Activated naive CD4-positive, alpha-beta T cell treated with anti-CD3 and anti-CD28 coated beads for 36 hours (primary cell): ENCODE measurements at regions of chr12 and their contacts with region 1.

Region 1: GRCh38 chr12:121399391-121400331 is at the start of gene RNF34:
- DNase-seq: peak; percentile 99
- H3K4me3 Mint-ChIP-seq: peak within 1 kb of the TSS; percentile 87
- H3K27ac Mint-ChIP-seq: peak within 1 kb of the TSS; percentile 93
- H3K4me1 Mint-ChIP-seq: peaks cover 32% of the 10 kb centered on the region
- H3K27me3 Mint-ChIP-seq: no peaks in the 10 kb centered on the region
- total RNA-seq, gene RNF34: 54.1 to 57.0 TPM

Region 2: GRCh38 chr12:121334513-121335343 is 64.9 kb before region 1 on chr12:
- CTCF ChIA-PET with region 1: interaction called, 17 read pairs
- intact Hi-C with region 1: loop called (anchors 1 kb)
- DNase-seq: peak; percentile 25
- H3K4me3 Mint-ChIP-seq: no peak overlapping the region
- H3K27ac Mint-ChIP-seq: no peak overlapping the region
- H3K4me1 Mint-ChIP-seq: no peaks in the 10 kb centered on the region
- H3K27me3 Mint-ChIP-seq: no peaks in the 10 kb centered on the region

Region 3: GRCh38 chr12:121376754-121377697 is 22.6 kb before region 1 on chr12:
- CTCF ChIA-PET with region 1: no interaction called
- intact Hi-C with region 1: no loop called
- DNase-seq: no peak
- H3K4me3 Mint-ChIP-seq: no peak overlapping the region
- H3K27ac Mint-ChIP-seq: no peak overlapping the region
- H3K4me1 Mint-ChIP-seq: no peaks in the 10 kb centered on the region
- H3K27me3 Mint-ChIP-seq: no peaks in the 10 kb centered on the region

Region 4: DNA sequence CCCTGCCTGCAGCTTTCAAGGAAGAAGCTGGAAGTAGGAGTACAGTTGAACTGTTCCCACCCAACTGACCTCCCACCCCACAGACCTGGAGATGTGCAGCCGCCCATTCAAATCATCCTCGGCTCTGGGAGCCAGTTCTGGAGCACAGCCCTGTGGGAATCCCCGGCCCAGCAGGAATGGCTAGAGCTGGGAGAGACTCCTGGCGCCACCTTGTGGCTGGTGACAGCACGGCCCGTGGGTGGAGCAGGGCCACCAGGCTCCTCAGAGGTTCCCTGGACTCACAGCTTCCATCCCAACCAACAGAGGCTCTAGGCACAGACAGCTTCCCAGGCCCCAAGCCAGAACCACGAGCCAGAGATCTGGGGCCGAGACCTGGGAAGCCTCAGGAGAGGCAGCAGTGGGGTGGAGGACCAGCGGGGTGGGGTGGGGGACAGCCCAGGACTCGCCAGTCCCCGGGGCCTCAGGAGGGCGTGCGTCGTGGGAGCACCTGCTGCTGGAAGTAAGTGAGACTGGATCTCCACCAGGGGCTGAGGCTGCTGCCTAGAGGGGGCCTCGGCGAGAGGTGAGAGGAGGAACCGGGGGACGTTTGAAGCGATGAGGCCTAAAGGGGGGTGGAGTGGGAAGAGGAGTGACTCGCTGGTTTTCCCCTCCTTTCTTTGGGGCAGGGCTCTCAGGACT is 43.7 kb after region 1 on chr12:
- CTCF ChIA-PET with region 1: interaction called, 17 read pairs
- intact Hi-C with region 1: no loop called
- DNase-seq: peak; percentile 81
- H3K4me3 Mint-ChIP-seq: no peak overlapping the region
- H3K27ac Mint-ChIP-seq: peak overlapping the region; percentile 74
- H3K4me1 Mint-ChIP-seq: peaks cover 3% of the 10 kb centered on the region
- H3K27me3 Mint-ChIP-seq: no peaks in the 10 kb centered on the region

Region 5: GRCh38 chr12:121579981-121580868 is 180.6 kb after region 1 on chr12:
- CTCF ChIA-PET with region 1: no interaction called
- intact Hi-C with region 1: loop called (anchors 2 kb)
- DNase-seq: peak; percentile 85
- H3K4me3 Mint-ChIP-seq: peak overlapping the region; percentile 90
- H3K27ac Mint-ChIP-seq: peak overlapping the region; percentile 92
- H3K4me1 Mint-ChIP-seq: peaks cover 16% of the 10 kb centered on the region
- H3K27me3 Mint-ChIP-seq: no peaks in the 10 kb centered on the region